ENCODE measurements at regions of chr20 and their contacts with region 1.

Region 1: GRCh38 chr20:48295445-48295963 is 510.2 kb upstream of the SULF2 start:
- DNase-seq: peak; percentile 84 to 99
- H3K4me3 ChIP-seq: no peak overlapping the region
- H3K27ac ChIP-seq: peak overlapping the region; percentile 87
- H3K4me1 ChIP-seq: peaks cover 59% of the 10 kb centered on the region
- H3K27me3 ChIP-seq: no peaks in the 10 kb centered on the region
- CTCF ChIP-seq: peak; percentile 76

Region 2: DNA sequence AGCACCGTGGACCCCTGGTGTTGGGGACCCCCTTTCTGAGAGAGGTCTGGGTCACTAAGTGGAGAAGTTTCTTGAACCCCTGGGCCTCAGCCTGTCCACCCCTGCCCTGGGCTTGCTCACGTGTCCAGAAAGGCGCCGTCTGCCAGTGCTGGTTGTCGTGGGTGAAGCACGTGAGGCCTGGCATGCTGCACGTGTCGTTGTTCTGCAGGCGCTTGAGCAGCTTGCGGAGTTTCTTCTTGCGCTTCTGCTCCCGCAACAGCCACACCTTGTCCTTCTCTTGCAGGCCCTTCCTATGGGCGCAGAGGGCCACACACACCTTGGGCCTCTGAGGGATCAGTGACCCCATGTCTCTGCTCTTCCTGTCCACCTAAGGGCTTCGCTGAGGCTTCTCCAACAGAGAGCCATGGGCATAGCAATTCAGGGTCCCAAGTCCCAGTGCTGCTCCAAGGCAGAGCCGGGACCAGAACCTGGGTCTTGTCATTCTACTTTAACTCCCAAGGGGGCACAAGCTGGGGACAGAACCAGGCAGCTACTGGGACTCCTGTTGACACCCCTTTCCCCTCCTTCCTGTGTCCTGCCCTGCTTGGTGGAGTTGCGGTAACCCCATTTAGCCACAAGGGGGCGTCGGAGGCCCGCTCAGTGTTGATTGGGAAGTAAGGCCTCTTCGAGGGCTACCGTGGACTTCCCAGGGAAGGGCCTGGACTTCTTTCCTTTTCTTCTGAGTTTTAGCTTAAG is 632.0 kb before region 1 on chr20:
- CTCF ChIA-PET with region 1: interaction called, 5 read pairs
- POLR2A ChIA-PET with region 1: no interaction called
- intact Hi-C with region 1: loop called (anchors 2 kb)
- DNase-seq: peak; percentile 73 to 87
- H3K4me3 ChIP-seq: no peak overlapping the region
- H3K27ac ChIP-seq: 0 out of 2 replicates have a peak overlapping the region, but pooled peaks have one; percentile 6
- H3K4me1 ChIP-seq: no peaks in the 10 kb centered on the region
- H3K27me3 ChIP-seq: no peaks in the 10 kb centered on the region
- CTCF ChIP-seq: peak; percentile 98

Region 3: DNA sequence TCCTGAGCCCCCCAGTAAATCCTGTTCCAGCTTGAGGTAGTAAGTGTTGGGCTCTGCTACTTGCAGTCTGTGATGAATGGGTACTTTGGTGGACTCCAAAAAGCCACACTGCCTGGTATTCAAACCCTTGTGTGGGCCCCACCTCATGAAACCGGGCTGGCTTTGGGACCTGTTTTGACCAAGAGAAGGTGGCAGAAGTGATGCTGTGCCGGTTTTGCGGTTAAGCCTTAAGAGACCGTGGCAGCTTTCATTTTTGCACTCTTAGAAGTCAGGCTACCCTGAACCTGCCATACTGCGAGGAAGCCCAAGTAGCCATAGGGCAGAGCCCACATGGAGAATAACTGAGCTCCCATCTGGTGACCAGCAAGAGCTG is 520.5 kb before region 1 on chr20:
- CTCF ChIA-PET with region 1: no interaction called
- POLR2A ChIA-PET with region 1: interaction called, 13 read pairs
- intact Hi-C with region 1: no loop called
- DNase-seq: no peak
- H3K4me3 ChIP-seq: no peak overlapping the region
- H3K27ac ChIP-seq: no peak overlapping the region
- H3K4me1 ChIP-seq: 0 out of 2 replicates have a peak, but pooled peaks cover 18% of the 10 kb centered on the region
- H3K27me3 ChIP-seq: no peaks in the 10 kb centered on the region
- CTCF ChIP-seq: no peak

Region 4: GRCh38 chr20:47973519-47974233 is 321.8 kb before region 1 on chr20:
- CTCF ChIA-PET with region 1: interaction called, 3 read pairs
- POLR2A ChIA-PET with region 1: interaction called, 6 read pairs
- intact Hi-C with region 1: loop called (anchors 1 kb)
- DNase-seq: peak; percentile 86 to 95
- H3K4me3 ChIP-seq: peak overlapping the region; percentile 68
- H3K27ac ChIP-seq: peak overlapping the region; percentile 100
- H3K4me1 ChIP-seq: peaks cover 60% of the 10 kb centered on the region
- H3K27me3 ChIP-seq: no peaks in the 10 kb centered on the region
- CTCF ChIP-seq: no peak

Region 5: GRCh38 chr20:48025031-48025515 is 270.4 kb before region 1 on chr20:
- CTCF ChIA-PET with region 1: no interaction called
- POLR2A ChIA-PET with region 1: no interaction called
- intact Hi-C with region 1: loop called (anchors 1 kb)
- DNase-seq: peak; percentile 85 to 88
- H3K4me3 ChIP-seq: peak overlapping the region; percentile 72
- H3K27ac ChIP-seq: peak overlapping the region; percentile 94
- H3K4me1 ChIP-seq: peaks cover 35% of the 10 kb centered on the region
- H3K27me3 ChIP-seq: no peaks in the 10 kb centered on the region
- CTCF ChIP-seq: no peak

Region 6: DNA sequence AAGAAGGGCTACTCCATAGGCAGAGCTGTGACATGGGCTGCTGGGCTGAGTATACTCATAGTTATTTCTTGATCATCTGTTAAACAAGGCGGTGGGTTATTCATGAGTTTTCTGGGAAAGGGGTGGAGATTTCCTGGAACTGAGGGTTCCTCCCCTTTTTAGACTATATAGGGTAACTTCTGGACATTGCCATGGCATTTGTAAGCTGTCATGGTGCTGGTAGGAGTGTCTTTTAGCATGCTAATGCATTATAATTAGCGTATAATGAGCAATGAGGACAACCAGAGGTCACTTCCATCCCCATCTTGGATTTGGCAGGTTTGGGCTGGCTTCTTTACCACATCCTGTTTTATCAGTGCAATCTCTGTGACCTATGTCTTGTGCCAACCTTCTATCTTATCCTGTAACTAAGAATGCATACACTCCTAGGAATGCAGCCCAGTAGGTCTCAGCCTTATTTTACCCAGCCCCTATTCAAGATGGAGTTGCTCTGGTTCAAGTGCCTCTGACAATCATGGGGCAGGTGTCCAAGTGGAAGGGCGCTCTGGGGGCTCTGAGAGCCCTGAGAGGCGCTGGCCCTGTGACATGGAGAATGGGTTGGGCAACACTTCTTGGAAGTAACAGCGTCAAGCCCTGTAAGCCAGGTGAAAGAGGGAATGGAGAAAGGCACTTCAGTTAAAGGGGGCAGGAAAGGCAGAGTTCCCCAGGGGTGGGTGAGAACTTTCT is 156.1 kb before region 1 on chr20:
- CTCF ChIA-PET with region 1: no interaction called
- POLR2A ChIA-PET with region 1: no interaction called
- intact Hi-C with region 1: loop called (anchors 1 kb)
- DNase-seq: peak; percentile 79 to 88
- H3K4me3 ChIP-seq: no peak overlapping the region
- H3K27ac ChIP-seq: peak overlapping the region; percentile 45
- H3K4me1 ChIP-seq: peaks cover 23% of the 10 kb centered on the region
- H3K27me3 ChIP-seq: no peaks in the 10 kb centered on the region
- CTCF ChIP-seq: no peak

Region 7: GRCh38 chr20:48374991-48375595 is 79.6 kb after region 1 on chr20:
- CTCF ChIA-PET with region 1: interaction called, 6 read pairs
- POLR2A ChIA-PET with region 1: interaction called, 4 read pairs
- intact Hi-C with region 1: loop called (anchors 2 kb)
- DNase-seq: peak in 1 of 2 experiments; percentile 60
- H3K4me3 ChIP-seq: peak overlapping the region; percentile 57; the same call in 1 of the 2 replicates
- H3K27ac ChIP-seq: peak overlapping the region; percentile 99
- H3K4me1 ChIP-seq: peaks cover 45% of the 10 kb centered on the region
- H3K27me3 ChIP-seq: no peaks in the 10 kb centered on the region
- CTCF ChIP-seq: no peak